PC-9 (cell line): ENCODE measurements at regions of chr3 and their contacts with region 1.

Region 1: GRCh38 chr3:38164966-38165680 is at the start of gene OXSR1:
- DNase-seq: peak; percentile 99
- H3K4me3 ChIP-seq: peak within 1 kb of the TSS; percentile 74
- H3K27ac ChIP-seq: peak within 1 kb of the TSS; percentile 96
- H3K4me1 ChIP-seq: peaks cover 38% of the 10 kb centered on the region
- H3K27me3 ChIP-seq: no peaks in the 10 kb centered on the region
- CTCF ChIP-seq: no peak
- total RNA-seq, gene OXSR1: 50.2 and 54.3 TPM in 2 replicates

Region 2: GRCh38 chr3:37974121-37975083 is 190.7 kb before region 1 on chr3:
- CTCF ChIA-PET with region 1: no interaction called
- POLR2A ChIA-PET with region 1: interaction called, 27 read pairs
- intact Hi-C with region 1: no loop called
- DNase-seq: peak; percentile 47 to 62
- H3K4me3 ChIP-seq: no peak overlapping the region
- H3K27ac ChIP-seq: no peak overlapping the region
- H3K4me1 ChIP-seq: no peaks in the 10 kb centered on the region
- H3K27me3 ChIP-seq: no peaks in the 10 kb centered on the region
- CTCF ChIP-seq: peak; percentile 85

Region 3: DNA sequence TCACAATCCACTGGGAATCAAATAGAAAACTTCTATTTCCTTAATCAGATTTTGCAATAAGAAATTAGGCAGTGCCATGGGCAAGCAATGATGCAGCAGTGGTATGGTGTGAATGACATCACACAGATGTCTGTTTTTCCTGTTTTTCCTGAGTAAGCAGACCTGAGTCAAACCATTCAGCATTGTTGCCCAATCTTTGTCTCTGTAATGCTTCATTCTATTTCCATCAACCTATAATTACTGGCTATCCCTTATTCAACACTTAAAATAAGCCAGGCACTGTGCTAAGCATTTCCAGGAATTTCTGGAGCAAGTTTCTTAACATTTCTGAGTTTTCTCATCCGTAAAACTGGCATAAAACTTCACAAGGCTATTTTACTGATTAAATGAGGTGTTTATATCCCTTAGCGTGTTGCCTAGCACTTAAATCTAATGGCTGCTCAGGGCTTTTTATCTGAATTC is 11.1 kb before region 1 on chr3:
- CTCF ChIA-PET with region 1: interaction called, 6 read pairs
- POLR2A ChIA-PET with region 1: interaction called, 8 read pairs
- intact Hi-C with region 1: loop called (anchors 1 kb)
- DNase-seq: peak; percentile 42 to 97
- H3K4me3 ChIP-seq: peak overlapping the region; percentile 3; the same call in 1 of the 2 replicates
- H3K27ac ChIP-seq: peak overlapping the region; percentile 92
- H3K4me1 ChIP-seq: peaks cover 73% of the 10 kb centered on the region
- H3K27me3 ChIP-seq: no peaks in the 10 kb centered on the region
- CTCF ChIP-seq: no peak